Gastrocnemius medialis (tissue), 4 donors: ENCODE measurements at regions of chr17 and their contacts with region 1.

Region 1: GRCh38 chr17:55852734-55853133 is 101.9 kb downstream of the PCTP start:
- DNase-seq: no peak
- ATAC-seq: no peak
- H3K4me3 ChIP-seq: no peak overlapping the region
- H3K27ac ChIP-seq: no peak overlapping the region
- H3K4me1 ChIP-seq: no peaks in the 10 kb centered on the region
- H3K27me3 ChIP-seq: no peaks in the 10 kb centered on the region
- CTCF ChIP-seq: no peak
- POLR2A ChIP-seq: no peak

Region 2: GRCh38 chr17:55053855-55054254 is 798.9 kb before region 1 on chr17:
- in situ Hi-C with region 1: no loop called
- intact Hi-C with region 1: no loop called
- DNase-seq: no peak
- ATAC-seq: no peak
- H3K4me3 ChIP-seq: no peak overlapping the region
- H3K27ac ChIP-seq: no peak overlapping the region
- H3K4me1 ChIP-seq: no peaks in the 10 kb centered on the region
- H3K27me3 ChIP-seq: no peaks in the 10 kb centered on the region
- CTCF ChIP-seq: peak in 1 of 5 experiments; percentile 21
- POLR2A ChIP-seq: no peak

Region 3: GRCh38 chr17:55794725-55795482 is 57.8 kb before region 1 on chr17:
- in situ Hi-C with region 1: loop called in 1 of 4 experiments (anchors 10 kb)
- intact Hi-C with region 1: no loop called
- DNase-seq: no peak
- ATAC-seq: no peak
- H3K4me3 ChIP-seq: no peak overlapping the region
- H3K27ac ChIP-seq: no peak overlapping the region
- H3K4me1 ChIP-seq: no peaks in the 10 kb centered on the region
- H3K27me3 ChIP-seq: no peaks in the 10 kb centered on the region
- CTCF ChIP-seq: no peak
- POLR2A ChIP-seq: no peak